GM13976 (cell line): ENCODE measurements at regions of chr4 and their contacts with region 1.

Region 1: GRCh38 chr4:123102897-123103471 is 180.6 kb upstream of the NUDT6 start:
- DNase-seq: peak; percentile 41
- CTCF ChIP-seq: peak; percentile 56

Region 2: DNA sequence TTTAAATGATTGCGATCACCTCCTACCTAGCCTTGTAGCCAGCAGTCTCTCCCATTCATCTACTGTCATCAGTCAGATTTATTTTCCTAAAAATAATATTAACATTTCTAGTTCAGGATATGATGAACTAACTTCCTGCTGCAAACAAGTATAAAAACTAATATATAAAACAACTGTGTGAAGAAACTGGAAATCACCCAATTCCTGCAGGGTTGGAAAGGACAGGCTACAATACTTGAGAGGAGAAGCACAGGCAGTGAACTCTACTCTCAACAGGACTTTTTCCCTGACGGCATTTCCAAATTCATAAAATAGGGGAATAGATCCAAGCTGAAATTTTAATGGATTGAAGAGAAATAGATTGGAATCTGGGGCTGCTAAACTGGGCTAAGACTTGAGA is 384.7 kb before region 1 on chr4:
- in situ Hi-C with region 1: no loop called
- DNase-seq: no peak
- CTCF ChIP-seq: no peak

Region 3: GRCh38 chr4:123380728-123381716 is 278.0 kb after region 1 on chr4:
- in situ Hi-C with region 1: no loop called
- DNase-seq: no peak
- CTCF ChIP-seq: no peak

Region 4: DNA sequence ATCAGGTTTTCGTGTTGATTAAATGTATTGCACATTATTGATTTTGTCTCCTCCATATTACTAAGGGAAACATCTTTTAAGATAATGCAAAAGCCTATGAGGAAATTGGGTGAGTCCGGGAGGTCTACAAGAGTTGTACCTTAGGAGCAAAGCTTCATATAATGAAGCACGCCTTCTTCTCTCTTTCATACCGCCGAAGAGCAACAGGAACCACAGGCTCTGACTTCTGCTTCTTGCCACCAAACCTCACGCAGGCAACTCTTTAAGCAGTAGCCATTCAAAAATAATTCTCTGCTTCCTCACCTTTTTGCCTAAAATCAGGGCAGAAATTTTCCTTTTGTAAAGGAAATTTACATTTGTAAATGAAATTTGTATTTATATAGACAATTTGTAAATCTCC is 433.2 kb after region 1 on chr4:
- in situ Hi-C with region 1: no loop called
- DNase-seq: no peak
- CTCF ChIP-seq: no peak

Region 5: DNA sequence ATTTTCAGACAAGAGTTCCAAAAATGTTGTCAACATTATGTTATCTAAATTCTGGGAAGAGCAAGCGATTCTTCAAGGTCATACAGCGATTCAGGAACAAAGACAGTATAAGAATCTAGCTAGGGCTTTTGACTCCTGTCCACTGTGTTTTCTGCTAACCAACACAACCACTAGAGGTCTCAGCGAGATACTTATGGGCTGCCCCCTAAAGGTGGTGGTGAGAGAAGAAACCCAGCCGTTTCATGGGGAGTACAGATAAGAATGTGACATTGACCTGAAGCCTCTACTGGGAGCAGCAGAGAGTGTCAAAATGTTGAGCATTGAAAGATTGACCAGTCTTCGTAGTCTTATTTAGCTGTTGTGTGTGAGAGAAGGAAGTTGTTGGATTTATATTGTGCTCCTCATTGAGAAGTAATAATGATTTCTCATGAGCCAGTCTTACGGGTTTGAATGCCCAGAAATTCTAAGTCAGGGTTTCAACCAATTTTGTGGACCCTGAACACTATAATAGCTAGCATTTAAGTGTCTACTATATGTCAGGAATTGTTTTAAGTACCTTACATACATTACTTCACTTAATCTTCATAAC is 461.9 kb after region 1 on chr4:
- in situ Hi-C with region 1: loop called (anchors 25 kb)
- DNase-seq: peak; percentile 77
- CTCF ChIP-seq: peak; percentile 90

Region 6: DNA sequence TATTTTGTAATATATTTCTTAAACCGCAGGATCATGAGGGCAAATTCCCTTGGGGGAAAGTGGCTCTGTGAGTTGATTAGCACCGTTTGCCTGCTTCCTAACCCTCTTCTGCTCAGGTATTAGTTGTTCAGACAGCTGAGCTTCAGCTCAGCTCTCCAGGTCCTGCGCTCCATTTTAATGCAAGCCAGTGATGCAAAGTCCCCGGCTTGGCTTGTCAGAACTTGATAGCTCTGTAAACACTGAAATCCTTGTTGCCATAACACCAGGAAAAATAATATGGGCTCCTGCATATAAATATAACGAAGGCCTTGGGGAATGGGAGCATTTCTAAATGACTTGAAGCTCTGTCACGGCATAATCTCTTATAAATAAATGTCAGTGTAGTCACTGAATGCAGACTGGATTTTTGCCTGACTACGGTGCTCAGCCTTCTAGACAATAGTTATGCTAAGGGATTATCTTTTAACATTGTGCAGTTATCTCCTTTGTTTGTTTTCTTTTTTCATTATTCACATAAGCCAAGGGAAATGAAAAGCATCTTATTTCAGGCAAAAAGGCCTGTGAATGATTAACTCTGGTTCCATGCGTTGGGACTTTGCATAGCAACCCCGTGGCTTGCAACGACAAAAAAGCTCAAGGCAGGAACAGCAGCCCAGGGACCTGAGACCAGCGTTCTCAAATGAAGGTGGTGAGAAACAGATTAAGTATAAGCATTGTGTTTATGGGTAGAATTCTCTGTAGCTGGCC is 546.8 kb after region 1 on chr4:
- in situ Hi-C with region 1: loop called (anchors 25 kb)
- DNase-seq: no peak
- CTCF ChIP-seq: no peak

Region 7: DNA sequence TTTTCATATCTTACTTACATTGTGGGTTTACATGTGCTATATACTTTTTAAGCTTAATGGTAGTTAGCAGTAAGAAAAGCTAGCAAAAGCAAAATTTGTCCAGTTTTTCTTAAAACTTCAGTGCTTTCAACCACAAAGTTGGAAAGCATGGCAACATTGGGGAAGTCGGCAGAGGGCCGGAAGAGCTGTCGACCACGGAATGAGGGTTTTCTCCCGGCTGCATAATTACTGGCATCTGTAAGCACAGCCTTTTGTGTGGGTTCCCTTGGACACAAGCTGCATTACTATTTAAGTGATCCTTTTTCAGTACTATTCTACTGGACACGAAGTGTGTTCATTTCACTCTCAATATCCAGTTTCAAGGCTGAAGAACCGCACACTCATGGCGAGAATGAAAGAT is 1049.1 kb after region 1 on chr4:
- in situ Hi-C with region 1: no loop called
- DNase-seq: no peak
- CTCF ChIP-seq: no peak